ENCODE measurements at regions of chr9 and their contacts with region 1.

Region 1: DNA sequence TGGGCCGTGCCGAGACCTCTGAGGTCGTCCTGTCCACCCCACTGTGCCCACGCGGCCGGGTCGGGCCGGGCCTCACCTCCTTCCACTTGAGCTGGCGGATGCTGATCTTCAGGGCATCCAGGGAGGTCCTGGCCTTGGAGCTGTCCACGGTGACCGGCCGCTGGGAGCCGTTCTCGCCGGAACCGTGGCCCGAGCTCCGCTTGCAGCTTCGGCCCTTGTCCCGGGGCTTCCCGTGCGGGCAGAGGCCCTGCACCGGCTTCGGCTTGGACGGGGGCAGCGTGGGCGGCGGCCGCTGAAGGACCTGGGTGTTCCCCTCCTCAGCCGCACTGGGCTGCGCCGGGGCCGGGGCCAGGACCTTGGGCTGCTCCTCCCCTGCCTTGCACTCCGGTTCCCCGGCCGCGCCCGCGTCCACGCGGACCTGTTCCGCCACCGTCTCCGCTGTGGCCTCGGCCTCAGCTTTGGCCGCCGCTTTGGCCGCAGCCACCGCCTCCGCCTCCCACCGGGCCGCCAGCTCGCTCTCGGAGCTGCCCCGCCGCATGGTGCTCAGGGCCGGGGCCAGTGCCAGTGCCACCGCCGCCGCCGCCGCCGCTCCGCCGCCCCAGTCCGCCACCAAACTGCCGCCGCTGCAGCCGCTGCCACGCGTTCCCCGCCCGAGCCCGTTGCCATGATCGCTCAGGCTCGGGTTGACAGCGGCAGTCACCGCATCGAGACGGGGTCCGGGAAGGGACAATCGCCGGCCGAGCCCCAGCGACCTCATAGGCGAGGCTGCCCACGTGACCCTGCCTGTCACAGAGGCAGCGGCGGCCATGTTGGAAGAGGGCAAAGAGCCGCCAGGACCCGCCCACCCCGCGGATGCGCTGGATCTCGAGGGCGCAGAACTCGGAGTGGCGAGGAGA is at the start of gene TTLL11:
- DNase-seq: peak; percentile 95
- H3K4me3 Mint-ChIP-seq: peak within 1 kb of the TSS; percentile 84
- H3K27ac Mint-ChIP-seq: peak within 1 kb of the TSS; percentile 73
- H3K4me1 Mint-ChIP-seq: peaks cover 25% of the 10 kb centered on the region
- H3K27me3 Mint-ChIP-seq: peaks cover 10% of the 10 kb centered on the region
- total RNA-seq, gene TTLL11: 3.0 and 4.5 TPM in 2 replicates

Region 2: DNA sequence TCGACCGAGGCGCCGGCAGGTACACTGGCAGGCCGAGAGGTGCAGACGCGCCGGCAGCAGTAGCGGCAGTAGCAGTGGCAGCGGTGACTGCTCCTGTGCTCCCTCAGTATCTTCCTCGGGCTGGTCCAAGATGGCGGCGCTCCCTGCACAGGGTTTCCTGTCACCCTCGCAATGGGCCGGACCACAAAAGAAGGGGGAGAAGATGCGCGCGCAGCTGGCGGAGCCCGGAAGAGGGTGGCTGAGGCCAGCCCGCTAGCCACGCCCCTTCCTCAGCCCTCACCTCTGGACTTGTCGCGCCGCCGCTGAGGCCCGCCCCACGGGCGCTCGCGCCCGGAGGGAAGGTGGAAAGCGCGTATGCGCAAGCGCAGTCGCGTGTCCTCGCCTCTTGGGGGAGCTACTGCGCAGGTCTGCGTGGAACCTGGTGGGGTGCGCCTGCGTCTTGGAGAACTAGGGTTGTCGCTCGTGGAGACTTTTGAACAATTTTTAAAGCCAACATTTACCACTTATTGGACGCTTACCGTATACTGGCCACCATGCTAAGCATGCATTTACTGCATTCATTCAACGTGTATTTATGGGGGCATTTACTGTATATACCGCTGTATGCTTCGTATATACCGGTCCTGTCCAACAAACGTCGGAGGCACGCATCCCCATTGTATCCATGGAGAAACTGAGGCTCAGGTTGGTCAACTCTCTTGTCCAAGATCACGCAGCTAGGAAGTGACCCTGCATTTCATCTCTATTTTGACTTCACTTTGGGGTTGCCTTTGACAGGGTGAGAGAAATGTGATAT is 890.9 kb before region 1 on chr9 and contains the start of gene RAB14:
- intact Hi-C with region 1: loop called (anchors 5 kb)
- DNase-seq: peak; percentile 100
- H3K4me3 Mint-ChIP-seq: peak within 1 kb of the TSS; percentile 96
- H3K27ac Mint-ChIP-seq: peak within 1 kb of the TSS; percentile 92
- H3K4me1 Mint-ChIP-seq: peaks cover 61% of the 10 kb centered on the region
- H3K27me3 Mint-ChIP-seq: no peaks in the 10 kb centered on the region
- total RNA-seq, gene RAB14: 64.8 and 69.3 TPM in 2 replicates

Region 3: DNA sequence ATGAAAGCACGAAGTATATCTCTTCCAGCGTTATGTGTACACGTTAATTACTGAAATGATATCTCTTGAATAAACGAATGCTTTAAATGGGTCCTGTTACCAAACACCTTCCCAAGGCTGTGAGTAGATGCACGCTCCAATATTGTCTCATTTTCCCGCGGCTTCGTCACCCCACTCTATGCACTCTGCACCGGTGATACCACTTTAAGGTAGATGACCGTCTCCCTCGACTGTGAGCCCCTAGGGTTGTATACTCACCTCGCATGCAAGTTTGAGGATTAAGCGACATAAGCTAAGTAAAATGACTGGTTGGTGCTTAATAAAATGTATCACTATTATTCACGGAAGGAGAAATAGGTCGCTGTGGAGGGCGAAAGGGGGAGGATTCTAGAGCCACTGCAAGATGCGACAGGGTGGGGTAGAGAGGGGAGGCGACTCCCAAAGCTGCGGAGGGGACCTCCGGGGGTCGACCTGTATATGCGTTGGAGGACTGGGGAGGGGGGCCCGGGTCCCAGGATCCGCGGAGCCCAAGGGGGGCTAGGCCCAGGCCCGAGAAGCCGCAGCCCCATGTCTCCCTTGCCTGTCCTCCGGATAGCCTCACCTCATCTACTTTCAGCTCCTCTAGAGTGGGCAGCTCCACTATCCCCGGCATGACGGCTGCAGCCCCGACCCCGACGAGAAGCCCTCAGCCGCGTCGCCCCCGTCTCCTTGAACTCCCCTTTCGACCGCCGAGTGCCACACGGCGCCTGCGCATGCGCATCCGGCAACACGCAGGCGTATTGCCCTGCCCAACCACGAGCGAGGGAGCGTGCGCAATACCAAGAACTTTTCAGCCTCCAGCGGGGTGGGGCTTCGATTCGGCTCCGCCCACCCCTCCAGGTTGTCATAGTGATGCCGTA is 66.4 kb after region 1 on chr9 and contains the starts of genes MORN5 and NDUFA8:
- intact Hi-C with region 1: loop called (anchors 1 kb)
- DNase-seq: peak; percentile 95
- H3K4me3 Mint-ChIP-seq: peak within 1 kb of the TSS; percentile 93
- H3K27ac Mint-ChIP-seq: peak within 1 kb of the TSS; percentile 87
- H3K4me1 Mint-ChIP-seq: peaks cover 35% of the 10 kb centered on the region
- H3K27me3 Mint-ChIP-seq: peaks cover 12% of the 10 kb centered on the region
- total RNA-seq, gene MORN5: not detected in 2 replicates
- total RNA-seq, gene NDUFA8: 49.6 and 51.6 TPM in 2 replicates

Region 4: DNA sequence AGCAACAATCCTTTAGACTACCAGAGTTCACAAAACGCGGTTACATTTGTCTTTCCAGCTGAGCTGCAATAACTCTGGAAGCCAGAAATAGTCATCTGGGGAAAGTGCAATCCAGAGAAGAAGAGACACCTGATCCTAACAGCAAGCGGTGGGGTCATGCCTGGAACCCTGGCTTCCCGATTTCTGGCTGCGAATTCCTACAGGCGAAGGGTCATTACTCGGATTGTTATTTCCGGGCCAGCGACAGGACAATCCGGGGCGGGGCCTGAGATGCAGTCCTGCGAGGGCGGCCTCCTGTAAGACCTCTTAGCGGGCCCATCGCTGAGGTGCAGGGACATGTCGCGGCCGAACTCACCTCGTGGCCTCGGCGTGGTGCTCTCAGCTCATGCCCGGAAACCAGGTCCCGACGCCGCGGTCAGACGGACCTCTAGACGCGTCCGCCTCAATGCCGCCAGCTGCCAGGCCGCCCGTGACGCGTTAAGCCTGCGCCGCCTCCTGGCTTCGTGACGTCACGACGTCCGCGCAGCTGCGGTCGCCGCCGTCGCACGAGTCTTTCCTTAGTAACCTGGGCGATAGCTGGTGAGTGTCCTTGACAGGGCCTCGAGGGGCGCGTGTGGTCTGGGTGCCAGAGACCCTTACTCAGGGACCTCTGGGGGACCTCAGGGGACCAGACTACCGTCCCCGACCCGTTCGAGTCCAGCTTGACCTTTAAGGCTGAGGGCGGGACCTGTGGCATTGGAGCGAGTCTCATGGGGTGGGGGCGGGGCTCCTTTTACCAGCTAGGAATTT is 171.7 kb after region 1 on chr9 and contains the starts of genes MRRF and RBM18:
- intact Hi-C with region 1: loop called (anchors 2 kb)
- DNase-seq: peak; percentile 89
- H3K4me3 Mint-ChIP-seq: peak within 1 kb of the TSS; percentile 97
- H3K27ac Mint-ChIP-seq: peak within 1 kb of the TSS; percentile 100
- H3K4me1 Mint-ChIP-seq: peaks cover 38% of the 10 kb centered on the region
- H3K27me3 Mint-ChIP-seq: no peaks in the 10 kb centered on the region
- total RNA-seq, gene MRRF: 58.8 and 66.0 TPM in 2 replicates
- total RNA-seq, gene RBM18: 29.9 and 31.5 TPM in 2 replicates

Region 5: DNA sequence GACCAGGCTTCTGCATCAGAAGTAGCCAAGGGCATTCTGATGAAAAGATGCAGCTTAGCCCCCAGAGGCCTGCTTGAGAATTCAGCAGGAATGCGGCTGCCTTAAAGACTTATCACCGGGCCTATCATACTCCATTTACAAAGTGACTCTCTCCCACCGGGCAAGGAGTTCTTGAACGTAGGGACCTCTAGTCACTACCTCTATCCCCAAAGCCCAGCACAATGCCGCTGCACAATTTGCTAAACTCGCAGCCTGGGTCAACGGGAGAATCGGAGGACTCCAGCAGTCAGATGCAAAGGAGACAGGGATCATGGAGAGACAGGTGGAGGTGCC is 734.9 kb after region 1 on chr9:
- intact Hi-C with region 1: loop called (anchors 2 kb)
- DNase-seq: no peak
- H3K4me3 Mint-ChIP-seq: peak overlapping the region; percentile 96
- H3K27ac Mint-ChIP-seq: peak overlapping the region; percentile 84
- H3K4me1 Mint-ChIP-seq: peaks cover 36% of the 10 kb centered on the region
- H3K27me3 Mint-ChIP-seq: no peaks in the 10 kb centered on the region

Region 6: GRCh38 chr9:123268240-123268949 is 1175.5 kb after region 1 on chr9 and contains the start of gene STRBP:
- intact Hi-C with region 1: loop called (anchors 5 kb)
- DNase-seq: peak; percentile 91
- H3K4me3 Mint-ChIP-seq: peak within 1 kb of the TSS; percentile 86
- H3K27ac Mint-ChIP-seq: peak within 1 kb of the TSS; percentile 53
- H3K4me1 Mint-ChIP-seq: peaks cover 6% of the 10 kb centered on the region
- H3K27me3 Mint-ChIP-seq: peaks cover 7% of the 10 kb centered on the region
- total RNA-seq, gene STRBP: 22.1 and 24.2 TPM in 2 replicates